ENCODE measurements at regions of chr4 and their contacts with region 1.

Region 1: GRCh38 chr4:37891260-37892159 is 626 bp downstream of the TBC1D1 start:
- DNase-seq: peak; percentile 63
- H3K4me3 Mint-ChIP-seq: peak overlapping the region; percentile 87
- H3K27ac Mint-ChIP-seq: peak overlapping the region; percentile 89
- H3K4me1 Mint-ChIP-seq: peaks cover 43% of the 10 kb centered on the region
- H3K27me3 Mint-ChIP-seq: peaks cover 10% of the 10 kb centered on the region

Region 2: DNA sequence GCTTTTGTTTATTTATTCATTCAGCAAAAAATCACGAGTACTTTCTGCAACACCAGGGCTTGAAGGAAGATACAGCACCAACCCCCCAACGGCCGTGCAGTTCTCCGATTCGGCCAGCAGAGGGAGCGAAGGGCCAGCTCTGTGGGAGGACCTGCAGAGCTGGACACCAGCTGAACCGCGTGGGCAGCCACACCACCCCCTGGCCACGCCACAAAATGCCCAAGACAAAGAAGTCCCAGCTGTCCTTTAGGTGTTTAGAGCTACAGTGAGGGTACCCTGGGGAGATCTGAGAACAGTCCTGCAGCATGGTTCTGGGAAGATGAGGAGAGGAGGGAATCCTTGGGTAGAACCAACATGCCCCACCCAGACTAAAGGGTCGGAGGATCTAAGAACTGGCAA is 288.4 kb before region 1 on chr4:
- intact Hi-C with region 1: loop called (anchors 5 kb)
- DNase-seq: peak; percentile 61
- H3K4me3 Mint-ChIP-seq: no peak overlapping the region
- H3K27ac Mint-ChIP-seq: peak overlapping the region; percentile 76
- H3K4me1 Mint-ChIP-seq: peaks cover 37% of the 10 kb centered on the region
- H3K27me3 Mint-ChIP-seq: no peaks in the 10 kb centered on the region

Region 3: DNA sequence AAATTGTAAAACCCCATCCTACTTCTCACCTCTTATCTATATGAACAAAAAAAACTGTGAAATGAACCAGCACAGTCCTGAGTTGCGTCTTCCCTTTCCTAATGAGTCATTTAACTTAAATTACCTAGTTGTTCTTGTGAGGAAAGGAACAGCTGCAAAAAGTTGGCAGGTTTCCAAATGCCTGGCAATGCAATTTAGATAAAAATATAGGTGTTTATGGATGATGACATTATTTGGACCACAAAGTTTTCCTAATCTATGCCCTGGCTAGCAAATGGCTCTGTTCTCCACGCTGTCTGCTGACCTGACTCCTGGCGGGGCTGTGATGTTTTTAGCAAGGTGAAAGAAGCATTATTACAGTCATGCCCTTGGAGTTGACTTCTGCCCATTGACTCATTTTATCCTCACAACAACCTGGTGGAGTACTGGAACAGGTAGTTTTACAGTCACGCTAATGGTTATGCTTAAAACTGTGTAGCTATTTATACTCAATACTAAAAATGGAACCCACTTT is 175.6 kb before region 1 on chr4:
- intact Hi-C with region 1: no loop called
- DNase-seq: peak; percentile 11
- H3K4me3 Mint-ChIP-seq: no peak overlapping the region
- H3K27ac Mint-ChIP-seq: no peak overlapping the region
- H3K4me1 Mint-ChIP-seq: peaks cover 28% of the 10 kb centered on the region
- H3K27me3 Mint-ChIP-seq: peaks cover 37% of the 10 kb centered on the region

Region 4: GRCh38 chr4:37873386-37873785 is 18.1 kb before region 1 on chr4:
- intact Hi-C with region 1: loop called (anchors 2 kb)
- DNase-seq: no peak
- H3K4me3 Mint-ChIP-seq: no peak overlapping the region
- H3K27ac Mint-ChIP-seq: no peak overlapping the region
- H3K4me1 Mint-ChIP-seq: peaks cover 22% of the 10 kb centered on the region
- H3K27me3 Mint-ChIP-seq: no peaks in the 10 kb centered on the region

Region 5: GRCh38 chr4:37977471-37978247 is 86.1 kb after region 1 on chr4:
- intact Hi-C with region 1: loop called (anchors 1 kb)
- DNase-seq: peak; percentile 71
- H3K4me3 Mint-ChIP-seq: peak overlapping the region; percentile 81
- H3K27ac Mint-ChIP-seq: peak overlapping the region; percentile 78
- H3K4me1 Mint-ChIP-seq: peaks cover 28% of the 10 kb centered on the region
- H3K27me3 Mint-ChIP-seq: no peaks in the 10 kb centered on the region

Region 6: DNA sequence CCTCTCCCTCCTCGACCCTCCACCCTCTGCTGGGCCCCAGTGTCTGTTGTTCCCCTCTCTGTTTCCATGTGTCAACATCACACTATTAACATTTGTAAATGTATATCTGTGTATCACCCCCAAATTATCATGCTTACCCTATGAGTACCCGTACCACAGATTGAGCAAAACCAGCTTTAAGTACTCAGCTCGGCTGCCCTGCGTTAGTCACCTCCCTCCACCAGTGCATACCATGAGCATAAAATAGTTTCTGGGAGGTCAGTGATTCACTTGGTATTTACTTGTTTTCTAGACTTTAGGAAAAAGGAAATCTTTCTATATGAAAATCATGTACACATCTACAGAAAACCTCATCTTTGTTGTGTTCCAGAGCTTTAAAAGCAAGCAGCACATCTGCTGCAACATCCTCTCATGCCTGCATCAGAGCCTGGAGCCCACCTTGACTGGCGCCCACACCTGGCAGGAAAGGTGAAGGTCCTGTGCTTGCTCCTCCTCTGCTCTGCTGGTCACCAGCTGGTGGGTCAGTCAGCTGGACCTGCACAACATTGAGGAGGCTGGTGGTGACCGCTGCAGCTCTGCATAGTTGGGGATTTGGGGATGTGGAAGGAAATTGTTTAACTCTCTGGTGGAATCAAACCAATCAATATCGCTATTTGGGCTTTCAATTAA is 558.1 kb after region 1 on chr4:
- intact Hi-C with region 1: loop called (anchors 5 kb)
- DNase-seq: no peak
- H3K4me3 Mint-ChIP-seq: no peak overlapping the region
- H3K27ac Mint-ChIP-seq: no peak overlapping the region
- H3K4me1 Mint-ChIP-seq: peaks cover 28% of the 10 kb centered on the region
- H3K27me3 Mint-ChIP-seq: peaks cover 3% of the 10 kb centered on the region

Region 7: GRCh38 chr4:38856524-38857337 is 965.2 kb after region 1 on chr4 and contains the start of gene TLR6:
- intact Hi-C with region 1: loop called (anchors 5 kb)
- DNase-seq: peak; percentile 47
- H3K4me3 Mint-ChIP-seq: peak within 1 kb of the TSS; percentile 73
- H3K27ac Mint-ChIP-seq: peak within 1 kb of the TSS; percentile 78
- H3K4me1 Mint-ChIP-seq: peaks cover 26% of the 10 kb centered on the region
- H3K27me3 Mint-ChIP-seq: peaks cover 5% of the 10 kb centered on the region
- total RNA-seq, gene TLR6: 0.37 and 0.48 TPM in 2 replicates